Mammary epithelial cell (primary cell): ENCODE measurements at regions of chr10 and their contacts with region 1.

Region 1: DNA sequence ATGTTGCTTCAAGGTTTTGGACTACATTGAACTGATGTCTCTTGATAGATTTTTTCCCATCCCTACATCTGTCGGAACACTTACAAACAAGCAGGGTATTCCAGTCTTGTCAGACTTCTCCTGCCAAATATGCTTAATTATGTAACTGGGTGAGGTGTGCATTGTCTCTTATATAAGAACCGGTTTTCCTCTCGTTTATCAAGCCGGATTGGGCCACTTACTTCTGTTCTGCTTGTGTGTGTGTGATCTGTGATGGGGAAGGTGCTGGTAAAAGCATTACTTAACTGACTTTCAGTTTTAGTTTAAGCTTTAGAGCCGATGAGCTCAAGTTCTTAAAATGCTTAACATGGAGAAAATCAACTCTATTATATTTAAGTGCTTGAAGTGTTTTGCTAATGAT is 57.9 kb downstream of the OTUD1 start:
- DNase-seq: no peak
- H3K4me3 ChIP-seq: no peak overlapping the region
- H3K27ac ChIP-seq: no peak overlapping the region
- H3K4me1 ChIP-seq: no peaks in the 10 kb centered on the region
- H3K27me3 ChIP-seq: peaks cover 10% of the 10 kb centered on the region
- CTCF ChIP-seq: no peak

Region 2: DNA sequence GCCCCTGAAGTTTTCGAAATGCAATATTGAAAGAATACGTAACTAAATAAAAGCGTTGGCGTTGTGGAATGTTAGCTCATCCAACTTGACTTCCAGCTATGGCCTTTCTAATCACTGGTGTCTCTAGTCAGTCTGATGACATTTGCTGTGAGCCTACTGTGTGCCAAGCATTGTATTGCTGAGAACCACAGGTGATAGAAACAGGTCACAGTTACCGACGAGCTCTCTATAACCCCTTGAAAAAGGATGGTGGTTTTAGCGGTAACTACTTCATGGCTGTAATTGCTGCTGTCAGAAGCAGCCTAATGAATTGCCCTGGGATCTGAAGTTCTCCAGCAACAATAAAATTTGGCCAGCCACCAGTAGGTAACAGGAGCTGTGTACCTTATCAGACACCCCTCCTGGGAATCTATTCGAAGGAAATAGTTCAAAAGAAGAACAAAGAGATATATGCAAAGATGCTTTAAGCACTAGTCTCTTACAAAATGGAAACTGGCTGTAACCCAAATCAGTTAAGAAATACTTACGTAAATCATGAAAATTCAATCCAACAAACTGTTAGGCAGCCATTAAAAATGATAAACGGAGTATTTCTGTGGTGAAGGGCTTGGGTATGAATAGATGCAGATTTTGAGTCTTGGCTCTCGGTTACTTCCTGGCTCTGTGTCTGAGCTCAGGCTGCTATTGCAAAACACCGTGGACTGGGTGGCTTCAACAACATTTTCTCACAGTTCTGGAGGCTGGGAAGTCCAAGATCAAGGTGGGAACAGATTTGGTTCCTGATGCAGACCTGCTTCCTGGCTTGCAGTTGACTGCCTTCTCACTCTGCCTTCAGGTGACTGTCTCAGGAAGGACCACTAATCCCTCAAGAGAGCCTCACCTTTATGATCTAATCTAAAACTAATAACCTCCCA is 399.8 kb before region 1 on chr10:
- CTCF ChIA-PET with region 1: no interaction called
- dilution Hi-C with region 1: no loop called
- in situ Hi-C with region 1: no loop called
- intact Hi-C with region 1: no loop called
- DNase-seq: peak; percentile 37
- H3K4me3 ChIP-seq: peak overlapping the region; percentile 67 to 81 (median 71)
- H3K27ac ChIP-seq: peak overlapping the region; percentile 47
- H3K4me1 ChIP-seq: peaks cover 31% of the 10 kb centered on the region
- H3K27me3 ChIP-seq: no peaks in the 10 kb centered on the region
- CTCF ChIP-seq: no peak

Region 3: GRCh38 chr10:23540401-23541030 is 43.8 kb after region 1 on chr10:
- CTCF ChIA-PET with region 1: no interaction called
- dilution Hi-C with region 1: no loop called
- in situ Hi-C with region 1: no loop called
- intact Hi-C with region 1: no loop called
- DNase-seq: no peak
- H3K4me3 ChIP-seq: no peak overlapping the region
- H3K27ac ChIP-seq: no peak overlapping the region
- H3K4me1 ChIP-seq: no peaks in the 10 kb centered on the region
- H3K27me3 ChIP-seq: no peaks in the 10 kb centered on the region
- CTCF ChIP-seq: no peak

Region 4: DNA sequence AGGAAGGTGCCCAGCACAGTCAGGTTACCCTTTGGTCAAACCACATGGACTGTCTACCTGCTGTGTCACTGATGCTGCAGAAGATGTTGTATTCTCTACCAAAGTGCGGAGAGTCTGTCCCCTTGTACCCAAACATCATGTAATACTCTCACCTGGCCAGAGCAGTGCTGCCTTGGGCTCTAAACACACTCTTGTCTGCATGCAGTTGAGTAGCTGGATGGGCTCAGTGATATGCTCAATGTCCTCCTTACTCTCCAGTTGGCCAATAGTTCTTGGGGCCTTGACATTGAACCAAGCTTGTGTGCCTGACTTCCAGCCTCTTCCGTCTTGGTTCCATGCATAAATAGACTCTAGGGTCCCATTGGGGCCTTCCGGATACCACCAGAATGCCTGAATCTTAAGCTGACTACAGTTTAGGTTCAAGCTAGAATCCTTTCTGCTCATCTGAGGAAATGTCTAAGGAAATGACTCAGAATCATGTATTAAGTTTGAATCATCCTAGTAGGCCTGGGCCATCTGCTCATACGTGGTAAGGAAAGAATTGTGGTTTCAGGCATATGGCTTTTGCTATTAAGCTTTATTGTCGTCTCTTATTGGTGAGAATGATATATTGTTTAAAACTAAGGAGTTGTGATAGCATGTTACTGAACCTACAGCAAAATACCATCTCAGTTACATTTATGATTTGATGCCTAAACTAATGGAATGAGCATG is 60.2 kb after region 1 on chr10:
- CTCF ChIA-PET with region 1: no interaction called
- dilution Hi-C with region 1: no loop called
- in situ Hi-C with region 1: no loop called
- intact Hi-C with region 1: loop called (anchors 2 kb)
- DNase-seq: peak; percentile 74
- H3K4me3 ChIP-seq: no peak overlapping the region
- H3K27ac ChIP-seq: no peak overlapping the region
- H3K4me1 ChIP-seq: peaks cover 17% of the 10 kb centered on the region
- H3K27me3 ChIP-seq: no peaks in the 10 kb centered on the region
- CTCF ChIP-seq: no peak

Region 5: DNA sequence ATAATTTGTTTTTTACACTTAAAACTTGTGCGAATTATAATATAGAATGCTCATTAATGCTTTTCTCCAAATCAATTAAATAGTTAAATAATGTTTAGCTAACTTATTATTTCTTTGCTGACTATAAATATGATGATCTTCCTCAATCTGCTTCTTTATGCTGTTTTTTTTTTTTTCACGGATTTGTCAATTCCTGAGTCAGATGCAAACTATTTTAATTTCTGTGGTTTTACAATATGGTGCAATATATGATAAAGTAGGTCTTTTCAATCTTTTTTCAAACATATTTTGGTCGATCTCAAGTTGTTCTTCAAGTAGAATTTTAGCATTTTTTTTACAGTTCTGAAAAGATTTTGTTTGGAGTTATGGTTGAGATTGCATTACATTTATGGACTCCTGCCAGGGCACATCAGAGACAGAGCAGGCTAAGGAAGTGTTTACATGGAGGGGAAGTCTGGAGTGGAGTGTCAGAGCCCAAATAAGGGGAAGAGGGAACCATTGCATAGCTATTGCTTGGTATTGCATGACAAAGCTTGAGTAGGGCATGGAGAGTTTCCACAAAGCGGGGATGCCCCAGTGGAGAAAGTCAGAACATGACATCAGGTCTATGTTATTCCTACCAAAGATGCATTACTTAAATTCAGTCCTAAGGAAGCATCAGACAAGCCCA is 146.5 kb after region 1 on chr10:
- CTCF ChIA-PET with region 1: no interaction called
- dilution Hi-C with region 1: no loop called
- in situ Hi-C with region 1: no loop called
- intact Hi-C with region 1: no loop called
- DNase-seq: no peak
- H3K4me3 ChIP-seq: no peak overlapping the region
- H3K27ac ChIP-seq: no peak overlapping the region
- H3K4me1 ChIP-seq: no peaks in the 10 kb centered on the region
- H3K27me3 ChIP-seq: peaks cover 2% of the 10 kb centered on the region
- CTCF ChIP-seq: no peak

Region 6: GRCh38 chr10:23702977-23703414 is 206.3 kb after region 1 on chr10:
- CTCF ChIA-PET with region 1: no interaction called
- dilution Hi-C with region 1: no loop called
- in situ Hi-C with region 1: no loop called
- intact Hi-C with region 1: no loop called
- DNase-seq: peak; percentile 47
- H3K4me3 ChIP-seq: no peak overlapping the region
- H3K27ac ChIP-seq: no peak overlapping the region
- H3K4me1 ChIP-seq: no peaks in the 10 kb centered on the region
- H3K27me3 ChIP-seq: no peaks in the 10 kb centered on the region
- CTCF ChIP-seq: peak; percentile 76 to 84